ENCODE measurements at regions of chr13 and their contacts with region 1.

Region 1: DNA sequence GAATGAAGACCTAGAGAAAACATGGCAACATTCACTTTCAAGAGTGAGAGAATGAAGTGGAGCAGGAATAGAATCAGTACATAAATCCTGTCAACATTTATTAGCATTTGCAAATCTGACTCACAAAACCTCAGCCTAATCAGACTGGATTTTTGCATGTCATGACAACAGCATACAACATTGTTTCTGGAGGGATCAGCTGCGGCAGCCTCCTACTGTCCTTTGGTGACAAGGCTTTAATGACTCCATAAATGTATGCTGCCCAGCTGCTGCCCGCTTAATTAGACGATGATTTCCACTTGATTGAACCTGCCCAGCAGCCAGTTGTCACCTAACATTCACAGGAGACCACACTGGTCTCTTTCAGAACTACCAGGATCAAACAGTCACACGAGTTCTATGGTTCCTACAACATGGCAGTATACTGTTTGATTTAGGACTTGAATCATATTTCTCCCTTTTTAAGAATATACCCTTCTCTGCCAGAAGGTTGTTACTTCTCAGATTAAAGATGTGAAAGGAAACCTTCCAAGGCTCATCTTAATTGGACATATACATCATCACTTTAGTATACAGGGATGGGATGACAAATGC is 9.3 kb downstream of the EBPL start:
- DNase-seq: peak in 1 of 2 donors; percentile 29
- H3K4me3 ChIP-seq: no peak overlapping the region
- H3K27ac ChIP-seq: no peak overlapping the region
- H3K4me1 ChIP-seq: no peaks in the 10 kb centered on the region
- H3K27me3 ChIP-seq: no peaks in the 10 kb centered on the region
- CTCF ChIP-seq: no peak
- EP300 ChIP-seq: no peak
- POLR2A ChIP-seq: no peak

Region 2: GRCh38 chr13:49082653-49083536 is 599.0 kb before region 1 on chr13:
- intact Hi-C with region 1: no loop called
- DNase-seq: no peak
- H3K4me3 ChIP-seq: no peak overlapping the region
- H3K27ac ChIP-seq: no peak overlapping the region
- H3K4me1 ChIP-seq: peaks cover 0 to 3% (median 0%) of the 10 kb centered on the region in 4 donors
- H3K27me3 ChIP-seq: no peaks in the 10 kb centered on the region
- CTCF ChIP-seq: no peak
- EP300 ChIP-seq: no peak
- POLR2A ChIP-seq: no peak

Region 3: GRCh38 chr13:49436890-49437289 is 245.0 kb before region 1 on chr13:
- intact Hi-C with region 1: no loop called
- DNase-seq: peak in 1 of 2 donors; percentile 62
- H3K4me3 ChIP-seq: no peak overlapping the region
- H3K27ac ChIP-seq: peak overlapping the region in 1 of 5 donors; percentile 37
- H3K4me1 ChIP-seq: no peaks in the 10 kb centered on the region
- H3K27me3 ChIP-seq: no peaks in the 10 kb centered on the region
- CTCF ChIP-seq: peak in 4 of 7 experiments; percentile 8 to 43 (median 22)
- EP300 ChIP-seq: no peak
- POLR2A ChIP-seq: no peak

Region 4: DNA sequence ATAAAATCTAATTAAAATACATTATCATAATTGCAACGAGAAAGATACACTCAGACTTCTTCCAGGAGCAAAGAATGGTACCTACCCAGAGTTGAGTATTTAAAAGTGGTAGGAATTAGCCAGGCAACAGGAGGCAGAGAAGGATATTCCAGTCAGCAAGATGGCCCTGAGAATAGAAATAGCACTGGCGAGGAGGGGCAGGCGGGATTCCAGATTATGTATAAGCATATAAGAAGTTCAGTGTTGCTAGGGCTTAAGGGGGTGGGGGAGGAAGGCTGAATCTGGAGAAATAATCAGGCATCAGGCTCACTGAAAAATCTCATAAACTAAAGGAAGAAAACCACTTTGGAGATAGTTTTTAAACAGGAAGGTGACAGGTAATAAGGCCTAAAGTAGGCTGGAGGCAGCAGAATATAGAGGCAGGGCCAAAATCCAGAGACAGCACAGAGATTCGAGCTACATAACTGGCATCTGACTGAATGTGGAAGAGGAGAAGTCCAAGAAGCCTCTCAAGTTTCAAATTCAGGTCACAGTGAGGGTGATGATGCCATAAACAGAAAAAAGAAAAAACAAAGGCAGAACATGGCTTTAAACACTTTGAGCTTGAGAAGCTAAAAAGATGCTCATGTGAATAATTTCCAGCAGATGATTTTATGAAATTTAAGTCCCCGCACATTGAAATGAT is 103.1 kb after region 1 on chr13:
- intact Hi-C with region 1: loop called (anchors 10 kb)
- DNase-seq: no peak
- H3K4me3 ChIP-seq: no peak overlapping the region
- H3K27ac ChIP-seq: no peak overlapping the region
- H3K4me1 ChIP-seq: peaks cover 6 to 80% (median 50%) of the 10 kb centered on the region in 4 donors
- H3K27me3 ChIP-seq: no peaks in the 10 kb centered on the region
- CTCF ChIP-seq: no peak
- EP300 ChIP-seq: no peak
- POLR2A ChIP-seq: no peak

Measured in stomach (tissue), 19 donors.